H1 (cell line): ENCODE measurements at regions of chr2 and their contacts with region 1.

Region 1: GRCh38 chr2:75064691-75065396 is 106.4 kb downstream of the POLE4 start:
- DNase-seq: peak in 1 of 2 experiments; percentile 90
- H3K4me3 ChIP-seq: no peak overlapping the region
- H3K27ac ChIP-seq: no peak overlapping the region
- H3K4me1 ChIP-seq: peaks cover 0 to 6% (median 0%) of the 10 kb centered on the region in 4 experiments; a peak in 3 of 7 replicates
- H3K27me3 ChIP-seq: peaks cover 0 to 2% (median 0%) of the 10 kb centered on the region in 4 experiments; a peak in 2 of 7 replicates
- CTCF ChIP-seq: peak; percentile 86 to 92 (median 90)
- EP300 ChIP-seq: no peak
- POLR2A ChIP-seq: no peak
- RAD21 ChIP-seq: peak; percentile 77 to 81

Region 2: GRCh38 chr2:75047189-75047991 is 17.5 kb before region 1 on chr2:
- CTCF ChIA-PET with region 1: interaction called, 21 read pairs
- POLR2A ChIA-PET with region 1: no interaction called
- DNase-seq: no peak
- H3K4me3 ChIP-seq: no peak overlapping the region
- H3K27ac ChIP-seq: no peak overlapping the region
- H3K4me1 ChIP-seq: no peaks in the 10 kb centered on the region
- H3K27me3 ChIP-seq: no peaks in the 10 kb centered on the region
- CTCF ChIP-seq: no peak
- EP300 ChIP-seq: no peak
- POLR2A ChIP-seq: no peak
- RAD21 ChIP-seq: no peak

Region 3: GRCh38 chr2:75076088-75076487 is 11.2 kb after region 1 on chr2:
- CTCF ChIA-PET with region 1: interaction called, 44 read pairs
- POLR2A ChIA-PET with region 1: no interaction called
- DNase-seq: no peak
- H3K4me3 ChIP-seq: no peak overlapping the region
- H3K27ac ChIP-seq: no peak overlapping the region
- H3K4me1 ChIP-seq: peaks cover 0 to 3% (median under 1%) of the 10 kb centered on the region in 4 experiments; a peak in 1 of 7 replicates
- H3K27me3 ChIP-seq: no peaks in the 10 kb centered on the region; a peak in 1 of 7 replicates
- CTCF ChIP-seq: no peak
- EP300 ChIP-seq: no peak
- POLR2A ChIP-seq: no peak
- RAD21 ChIP-seq: no peak

Region 4: GRCh38 chr2:75199428-75200011 is 134.7 kb after region 1 on chr2 and contains the start of gene TACR1:
- CTCF ChIA-PET with region 1: interaction called, 15 read pairs
- POLR2A ChIA-PET with region 1: no interaction called
- DNase-seq: peak in 1 of 2 experiments; percentile 66
- H3K4me3 ChIP-seq: peak within 1 kb of the TSS; percentile 42 to 67 (median 62)
- H3K27ac ChIP-seq: no peak within 1 kb of the TSS
- H3K4me1 ChIP-seq: peaks cover 0 to 12% (median 6%) of the 10 kb centered on the region in 4 experiments; a peak in 5 of 7 replicates
- H3K27me3 ChIP-seq: peaks cover 21 to 56% (median 49%) of the 10 kb centered on the region in 4 experiments
- CTCF ChIP-seq: peak; percentile 31 to 38 (median 35)
- EP300 ChIP-seq: no peak
- POLR2A ChIP-seq: no peak
- RAD21 ChIP-seq: peak; percentile 22 to 42; a peak in 3 of 4 replicates
- total RNA-seq, gene TACR1: 0.19 and 0.37 TPM in 2 replicates